ENCODE measurements at regions of chr17 and their contacts with region 1.

Region 1: GRCh38 chr17:75159191-75160031 is 5.1 kb upstream of the JPT1 start:
- DNase-seq: no peak

Region 2: GRCh38 chr17:75124041-75124818 is 35.2 kb before region 1 on chr17:
- intact Hi-C with region 1: loop called in 1 of 2 experiments (anchors 1 kb)
- DNase-seq: peak; percentile 86

Measured in posterior vena cava (tissue), 2 donors.